Activated T-helper 1 cell treated with anti-CD3 and anti-CD28 coated beads, Interleukin-12 subunit alpha, Interleukin-12 subunit beta, Interleukin-2, Interleukin-4 antibody, amounts not matched to agents 30 ng/mL and 10 ng/mL and 1 ng/mL, durations not matched to agents 14 hours and 24 hours and 36 hours (primary cell): ENCODE measurements at regions of chr3 and their contacts with region 1.

Region 1: DNA sequence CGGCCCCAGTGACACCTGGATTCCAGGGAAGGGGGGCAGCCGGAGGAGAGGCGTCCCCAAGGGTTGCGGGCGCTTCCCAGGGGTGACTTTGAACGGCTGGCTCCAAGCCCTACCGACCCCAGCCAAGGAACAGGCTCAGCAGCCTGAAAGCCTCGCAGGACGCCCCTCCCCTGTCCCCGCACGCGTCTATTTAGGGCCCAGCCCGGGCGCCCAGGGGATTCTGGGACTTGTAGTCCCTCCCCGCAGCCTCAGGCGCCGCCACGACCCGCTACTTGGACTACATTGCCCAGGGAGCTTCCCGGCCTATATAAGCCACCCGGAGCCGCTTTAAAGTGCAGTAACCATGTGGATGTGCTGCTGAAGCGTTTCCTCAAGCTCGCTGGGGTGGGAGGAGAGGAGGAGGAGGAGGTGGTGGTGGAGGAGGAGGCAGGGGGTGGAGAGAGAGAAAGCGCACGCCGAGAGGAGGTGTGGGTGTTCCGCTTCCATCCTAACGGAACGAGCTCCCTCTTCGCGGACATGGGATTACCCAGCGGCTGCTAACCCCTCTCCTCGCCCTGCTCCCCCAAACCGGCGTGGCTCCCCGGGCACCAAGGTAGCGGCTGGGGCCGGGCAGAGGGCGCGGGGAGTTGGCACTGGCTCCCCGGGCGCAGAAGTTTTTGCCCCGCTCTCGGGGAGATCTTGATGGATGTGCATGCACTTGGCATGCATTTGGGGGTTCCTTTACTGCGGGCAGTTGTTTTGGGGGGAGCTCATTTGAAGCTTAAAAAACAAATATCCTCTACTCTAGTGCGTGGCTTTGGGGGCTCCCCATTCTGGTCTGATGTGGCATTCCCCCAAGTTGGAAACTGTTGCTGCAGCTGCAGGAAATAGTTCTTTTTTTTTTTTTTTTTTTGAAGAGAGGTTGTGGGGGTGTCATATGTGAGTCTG is at the start of gene ITPR1:
- DNase-seq: peak; percentile 97
- H3K4me3 Mint-ChIP-seq: peak within 1 kb of the TSS; percentile 96
- H3K27ac Mint-ChIP-seq: peak within 1 kb of the TSS; percentile 83
- H3K4me1 Mint-ChIP-seq: peaks cover 59% of the 10 kb centered on the region
- H3K27me3 Mint-ChIP-seq: peaks cover 35% of the 10 kb centered on the region
- total RNA-seq, gene ITPR1: 108 and 113 TPM in 2 replicates

Region 2: GRCh38 chr3:3179407-3180094 is 1313.7 kb before region 1 on chr3 and contains the start of gene CRBN:
- intact Hi-C with region 1: loop called (anchors 1 kb)
- DNase-seq: peak; percentile 86
- H3K4me3 Mint-ChIP-seq: peak within 1 kb of the TSS; percentile 96
- H3K27ac Mint-ChIP-seq: peak within 1 kb of the TSS; percentile 85
- H3K4me1 Mint-ChIP-seq: peaks cover 48% of the 10 kb centered on the region
- H3K27me3 Mint-ChIP-seq: peaks cover 3% of the 10 kb centered on the region
- total RNA-seq, gene CRBN: 36.8 and 42.5 TPM in 2 replicates

Region 3: DNA sequence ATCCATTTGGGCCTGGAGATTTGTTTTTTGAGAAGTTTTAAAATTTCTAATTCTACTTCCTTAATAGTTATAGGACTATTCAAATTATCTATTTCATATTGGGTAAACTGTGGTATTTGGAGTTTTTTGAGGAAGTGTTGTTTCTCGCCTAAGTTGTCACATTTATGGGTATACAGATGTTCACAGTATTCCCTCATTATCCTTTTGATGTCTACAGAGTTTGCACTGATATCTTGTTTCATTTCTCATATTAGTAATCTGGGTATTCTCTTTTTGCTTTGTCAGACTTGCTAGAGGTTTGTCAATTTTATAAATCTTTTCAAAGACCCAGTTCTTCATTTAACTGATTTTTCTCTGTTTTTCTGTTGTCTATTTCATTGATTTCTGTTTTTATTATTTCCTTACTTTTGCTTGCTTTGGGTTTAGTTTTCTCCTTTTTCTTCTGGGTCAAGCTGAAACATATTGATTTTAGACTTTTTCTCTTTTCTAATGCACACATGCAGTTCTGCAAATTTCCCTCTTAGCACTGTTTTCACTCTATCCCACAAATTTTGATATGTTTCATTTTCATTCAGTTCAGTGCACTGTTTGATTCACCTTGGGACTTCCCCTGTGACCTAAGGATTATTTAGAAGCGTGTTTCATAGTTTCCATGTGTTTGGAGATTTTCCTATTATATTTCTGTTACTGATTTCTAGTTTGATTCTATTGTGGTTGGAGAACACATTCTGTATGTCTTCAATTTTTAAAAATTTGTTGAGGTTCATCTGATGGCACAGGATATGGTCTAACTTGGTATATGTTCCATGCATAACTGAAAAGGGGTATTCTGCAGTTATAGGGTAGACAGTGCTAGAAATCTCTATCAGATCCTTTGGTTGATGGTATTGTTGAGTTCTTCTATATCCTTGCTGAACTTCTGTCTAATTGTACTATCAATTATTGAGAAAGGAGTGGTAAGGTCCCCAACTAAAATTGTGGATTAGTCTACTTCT is 105.8 kb before region 1 on chr3:
- intact Hi-C with region 1: loop called (anchors 1 kb)
- DNase-seq: no peak
- H3K4me3 Mint-ChIP-seq: peak overlapping the region; percentile 8
- H3K27ac Mint-ChIP-seq: peak overlapping the region; percentile 88
- H3K4me1 Mint-ChIP-seq: peaks cover 52% of the 10 kb centered on the region
- H3K27me3 Mint-ChIP-seq: peaks cover 1% of the 10 kb centered on the region

Region 4: GRCh38 chr3:4466741-4467521 is 26.3 kb before region 1 on chr3 and contains the start of gene SUMF1:
- intact Hi-C with region 1: loop called (anchors 1 kb)
- DNase-seq: peak; percentile 68
- H3K4me3 Mint-ChIP-seq: peak within 1 kb of the TSS; percentile 95
- H3K27ac Mint-ChIP-seq: peak within 1 kb of the TSS; percentile 91
- H3K4me1 Mint-ChIP-seq: peaks cover 15% of the 10 kb centered on the region
- H3K27me3 Mint-ChIP-seq: peaks cover 2% of the 10 kb centered on the region
- total RNA-seq, gene SUMF1: 6.1 and 7.0 TPM in 2 replicates

Region 5: DNA sequence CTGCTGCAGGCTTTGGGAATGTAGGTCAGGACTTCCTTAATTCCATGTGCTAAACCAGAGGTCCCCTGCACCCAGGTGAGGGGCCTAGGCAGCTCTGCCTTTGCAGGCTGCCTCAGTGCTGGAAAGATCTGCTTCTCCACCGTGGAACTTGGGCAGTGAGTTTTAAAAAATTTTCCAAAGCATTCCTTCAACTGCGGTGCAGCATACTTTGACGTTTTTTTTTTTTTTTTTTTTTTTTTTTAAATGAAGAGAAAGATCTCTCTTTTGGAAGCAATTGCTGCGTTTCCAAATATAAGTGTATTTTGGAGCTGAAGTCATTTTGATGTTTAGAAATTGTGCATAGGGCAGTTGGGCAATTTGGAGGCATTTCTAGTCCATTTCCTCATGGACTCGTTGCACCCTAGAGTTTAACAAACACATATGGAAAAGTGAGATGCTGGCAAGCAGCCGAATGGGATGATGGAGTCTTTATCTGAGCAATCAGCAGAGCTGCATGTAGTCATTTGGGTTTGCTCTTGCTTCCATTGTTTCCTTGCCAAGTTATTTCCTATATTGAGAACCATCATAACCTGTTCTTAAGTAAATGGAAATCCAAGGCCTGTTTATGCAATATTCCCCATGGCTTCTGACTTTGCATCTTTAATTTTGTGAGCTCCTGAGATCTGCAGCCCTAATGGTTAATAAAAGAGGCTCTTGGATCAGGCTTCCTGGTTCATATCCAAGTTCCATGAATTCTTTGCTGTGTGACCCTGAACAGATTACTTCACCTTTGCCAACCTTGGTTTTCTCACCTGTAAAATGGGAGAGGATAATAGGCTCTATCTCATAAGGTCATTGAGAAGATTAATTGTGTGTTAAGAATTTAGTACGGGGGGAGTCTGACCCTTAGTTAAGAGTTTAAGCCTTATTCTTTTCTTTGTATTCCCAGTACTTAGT is 31.1 kb after region 1 on chr3:
- intact Hi-C with region 1: loop called (anchors 1 kb)
- DNase-seq: no peak
- H3K4me3 Mint-ChIP-seq: no peak overlapping the region
- H3K27ac Mint-ChIP-seq: no peak overlapping the region
- H3K4me1 Mint-ChIP-seq: peaks cover 25% of the 10 kb centered on the region
- H3K27me3 Mint-ChIP-seq: no peaks in the 10 kb centered on the region

Region 6: DNA sequence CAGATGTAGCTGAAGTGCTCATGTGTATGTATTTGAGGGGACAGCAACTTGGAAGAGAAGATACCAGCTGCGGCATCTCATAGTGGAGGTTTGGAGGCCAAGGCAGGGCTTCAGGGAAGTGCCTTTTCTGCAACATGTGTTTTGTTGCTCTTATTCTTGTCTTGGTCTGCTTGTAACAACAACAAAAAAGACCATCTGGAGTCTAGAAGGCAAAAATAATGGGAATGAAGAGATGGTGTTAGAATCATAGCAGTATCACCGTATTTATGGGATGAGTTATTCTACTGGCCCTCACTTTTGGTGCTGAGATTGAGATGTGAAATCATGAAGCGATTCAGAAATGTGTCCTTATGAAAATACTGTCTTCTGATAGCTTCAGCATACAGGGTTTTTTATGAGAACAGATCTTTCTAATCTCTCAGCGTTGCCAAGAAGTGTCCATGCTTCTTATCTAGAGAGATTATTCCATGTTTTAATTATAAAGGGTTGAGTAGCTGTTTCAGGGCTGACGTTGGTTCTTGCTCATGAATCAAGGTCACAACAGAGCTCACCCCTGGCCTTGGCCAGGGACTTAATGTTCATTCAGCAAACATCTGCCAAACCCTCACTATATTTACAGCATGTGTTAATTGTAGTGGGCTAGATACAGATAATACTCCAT is 57.9 kb after region 1 on chr3:
- intact Hi-C with region 1: no loop called
- DNase-seq: no peak
- H3K4me3 Mint-ChIP-seq: no peak overlapping the region
- H3K27ac Mint-ChIP-seq: no peak overlapping the region
- H3K4me1 Mint-ChIP-seq: peaks cover 9% of the 10 kb centered on the region
- H3K27me3 Mint-ChIP-seq: no peaks in the 10 kb centered on the region

Region 7: GRCh38 chr3:4776980-4777581 is 283.8 kb after region 1 on chr3:
- intact Hi-C with region 1: loop called (anchors 5 kb)
- DNase-seq: peak; percentile 32
- H3K4me3 Mint-ChIP-seq: peak overlapping the region; percentile 73
- H3K27ac Mint-ChIP-seq: peak overlapping the region; percentile 98
- H3K4me1 Mint-ChIP-seq: peaks cover 82% of the 10 kb centered on the region
- H3K27me3 Mint-ChIP-seq: no peaks in the 10 kb centered on the region

Region 8: GRCh38 chr3:5122030-5122740 is 628.9 kb after region 1 on chr3 and contains the start of gene ARL8B:
- intact Hi-C with region 1: loop called (anchors 2 kb)
- DNase-seq: peak; percentile 90
- H3K4me3 Mint-ChIP-seq: peak within 1 kb of the TSS; percentile 88
- H3K27ac Mint-ChIP-seq: peak within 1 kb of the TSS; percentile 87
- H3K4me1 Mint-ChIP-seq: peaks cover 40% of the 10 kb centered on the region
- H3K27me3 Mint-ChIP-seq: no peaks in the 10 kb centered on the region
- total RNA-seq, gene ARL8B: 43.4 and 51.0 TPM in 2 replicates